ENCODE measurements at regions of chr11 and their contacts with region 1.

Region 1: DNA sequence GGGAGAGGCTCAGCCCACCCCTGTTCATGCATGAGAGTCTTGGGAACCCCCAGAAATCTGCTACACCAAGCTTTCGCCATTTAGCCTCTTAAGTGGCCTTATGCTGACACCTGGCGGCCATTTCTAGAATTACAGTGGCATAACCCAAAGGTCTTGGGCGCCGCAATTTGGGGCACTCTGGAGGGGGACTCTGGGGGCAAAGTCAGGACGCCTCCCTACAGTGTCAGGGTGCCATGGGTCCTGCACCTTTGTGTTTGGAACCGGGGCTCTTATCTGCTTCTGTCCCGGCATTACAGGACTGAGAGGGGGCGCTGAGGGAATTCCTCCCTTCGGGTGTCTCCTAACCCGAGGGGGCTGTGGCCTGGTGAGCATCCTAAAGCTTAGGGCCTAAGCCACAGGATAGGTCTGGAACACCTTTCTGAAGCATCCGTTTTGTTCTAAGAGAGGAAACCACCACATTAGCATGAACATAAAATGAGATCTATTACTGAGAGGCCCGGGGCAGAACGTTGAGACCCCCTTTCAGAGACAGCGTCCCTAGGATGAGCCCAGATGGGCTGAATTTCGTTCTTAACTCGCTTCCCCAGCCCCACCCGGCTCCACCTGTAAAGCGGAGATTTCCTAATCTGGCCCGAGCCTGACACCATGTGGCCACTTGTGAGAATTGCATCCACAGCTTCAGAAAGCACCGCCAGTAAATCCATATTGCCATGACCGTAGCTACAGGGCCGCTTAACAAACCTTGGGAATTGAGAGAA is 9.3 kb downstream of the INS start:
- DNase-seq: peak; percentile 80
- H3K4me3 Mint-ChIP-seq: no peak overlapping the region
- H3K27ac Mint-ChIP-seq: no peak overlapping the region
- H3K4me1 Mint-ChIP-seq: no peaks in the 10 kb centered on the region
- H3K27me3 Mint-ChIP-seq: peaks cover 87% of the 10 kb centered on the region
- CTCF ChIP-seq: peak; percentile 81

Region 2: GRCh38 chr11:1694064-1694845 is 457.4 kb before region 1 on chr11:
- CTCF ChIA-PET with region 1: interaction called, 16 read pairs
- intact Hi-C with region 1: loop called (anchors 5 kb)
- DNase-seq: peak; percentile 94
- H3K4me3 Mint-ChIP-seq: peak overlapping the region; percentile 68
- H3K27ac Mint-ChIP-seq: no peak overlapping the region
- H3K4me1 Mint-ChIP-seq: peaks cover 16% of the 10 kb centered on the region
- H3K27me3 Mint-ChIP-seq: peaks cover 36% of the 10 kb centered on the region
- CTCF ChIP-seq: peak; percentile 92

Region 3: DNA sequence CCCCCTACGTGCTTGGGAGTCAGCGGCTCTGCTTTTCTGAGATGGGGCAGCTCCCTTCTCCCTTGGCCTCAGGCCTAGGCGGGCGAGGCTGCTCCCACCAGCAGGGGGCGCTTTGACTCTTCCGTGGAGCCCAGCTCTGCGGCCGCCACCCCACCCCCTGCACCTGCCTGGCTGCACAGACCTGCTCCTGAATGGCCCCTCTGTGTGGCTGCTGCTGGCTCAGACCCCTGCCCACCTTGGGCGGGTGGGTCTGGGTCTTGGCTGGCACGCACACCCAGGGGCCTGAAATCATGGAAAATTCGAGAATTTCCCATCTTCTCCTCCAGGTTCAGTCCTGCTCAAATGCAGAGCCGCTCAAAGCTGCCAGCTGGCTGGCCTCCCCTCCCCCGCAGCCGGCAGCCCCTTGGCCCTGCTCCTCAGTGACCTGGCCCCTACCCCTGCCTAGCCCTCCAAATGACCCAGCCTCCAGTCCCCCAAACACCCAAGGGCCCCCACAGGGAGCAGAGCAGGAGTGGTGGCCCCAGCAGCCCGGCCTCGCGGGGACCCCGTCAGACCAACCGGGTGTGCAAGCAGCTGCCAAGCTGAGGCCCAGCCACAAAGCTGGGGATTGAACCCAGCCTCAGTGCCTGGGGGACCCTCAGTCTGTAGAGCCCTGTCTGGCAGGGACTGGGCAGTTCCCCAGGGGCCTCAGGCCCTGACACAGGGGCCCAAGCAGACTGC is 269.0 kb before region 1 on chr11:
- CTCF ChIA-PET with region 1: interaction called, 16 read pairs
- intact Hi-C with region 1: loop called (anchors 5 kb)
- DNase-seq: peak; percentile 88
- H3K4me3 Mint-ChIP-seq: no peak overlapping the region
- H3K27ac Mint-ChIP-seq: no peak overlapping the region
- H3K4me1 Mint-ChIP-seq: no peaks in the 10 kb centered on the region
- H3K27me3 Mint-ChIP-seq: peaks cover 1% of the 10 kb centered on the region
- CTCF ChIP-seq: peak; percentile 83

Region 4: GRCh38 chr11:2027708-2028107 is 124.0 kb before region 1 on chr11:
- CTCF ChIA-PET with region 1: interaction called, 159 read pairs
- intact Hi-C with region 1: no loop called
- DNase-seq: no peak
- H3K4me3 Mint-ChIP-seq: no peak overlapping the region
- H3K27ac Mint-ChIP-seq: no peak overlapping the region
- H3K4me1 Mint-ChIP-seq: no peaks in the 10 kb centered on the region
- H3K27me3 Mint-ChIP-seq: no peaks in the 10 kb centered on the region
- CTCF ChIP-seq: no peak

Region 5: DNA sequence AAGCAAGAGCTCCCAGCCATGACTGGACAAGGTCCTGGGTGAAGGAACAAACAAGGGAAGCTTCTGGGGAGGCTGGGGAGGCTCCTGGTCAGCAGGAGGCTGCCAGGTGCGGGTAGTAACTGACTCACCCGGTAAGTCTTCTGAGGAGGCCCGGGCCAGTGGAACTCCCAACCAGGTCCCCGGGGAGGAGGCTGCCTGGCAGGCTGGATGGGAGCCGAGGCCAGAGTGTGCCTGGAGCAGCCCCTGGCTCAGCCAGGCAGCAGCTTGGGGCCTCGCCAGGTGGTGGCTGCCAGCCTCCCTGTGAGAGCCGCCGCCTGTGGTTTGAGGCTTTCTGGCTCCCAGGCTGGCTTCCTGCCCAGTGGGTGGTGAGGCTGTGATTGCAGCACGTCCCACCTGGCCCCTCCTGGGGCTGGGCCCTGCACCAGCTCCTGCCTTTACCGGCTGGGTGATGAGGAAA is 58.7 kb before region 1 on chr11:
- CTCF ChIA-PET with region 1: interaction called, 11 read pairs
- intact Hi-C with region 1: no loop called
- DNase-seq: peak; percentile 94
- H3K4me3 Mint-ChIP-seq: no peak overlapping the region
- H3K27ac Mint-ChIP-seq: no peak overlapping the region
- H3K4me1 Mint-ChIP-seq: peaks cover 16% of the 10 kb centered on the region
- H3K27me3 Mint-ChIP-seq: peaks cover 12% of the 10 kb centered on the region
- CTCF ChIP-seq: no peak

Region 6: DNA sequence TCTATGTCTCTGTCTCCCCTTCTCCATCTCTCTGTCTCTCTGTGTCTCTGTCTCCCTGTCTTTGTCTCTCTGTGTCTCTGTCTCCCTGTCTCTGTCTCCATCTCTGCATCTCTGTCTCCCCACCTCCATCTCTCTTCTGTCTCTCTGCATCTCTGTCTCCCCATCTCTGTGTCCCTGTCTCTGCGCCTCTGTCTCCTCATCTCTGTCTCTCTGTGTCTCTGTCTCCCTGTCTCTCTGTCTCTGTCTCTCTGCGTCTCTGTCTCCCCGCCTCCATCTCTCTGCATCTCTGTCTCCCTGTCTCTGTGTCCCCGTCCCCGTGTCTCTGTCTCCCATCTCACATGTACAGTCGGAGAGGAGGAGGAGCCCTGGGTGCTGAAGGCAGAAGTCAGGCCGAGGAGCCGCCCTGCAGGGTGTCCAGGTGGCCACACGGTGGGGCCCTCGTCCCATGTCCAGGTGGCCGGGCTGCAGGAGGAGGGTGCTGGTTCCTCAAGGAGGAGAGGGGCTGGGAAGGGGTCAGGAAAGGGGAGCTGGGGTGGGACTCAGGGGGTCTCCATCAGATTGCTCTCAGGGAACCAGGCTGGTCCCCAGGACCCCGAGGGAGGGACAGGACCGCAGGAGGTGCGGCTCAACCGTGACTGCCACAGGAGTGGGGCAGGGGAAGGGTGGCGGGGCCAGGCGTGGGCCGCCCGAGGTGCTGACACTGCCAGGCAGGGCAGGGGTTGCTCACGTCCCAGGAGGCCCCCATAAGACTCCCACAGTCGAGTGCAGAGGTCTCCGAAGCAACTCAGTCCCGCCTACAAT is 45.5 kb after region 1 on chr11:
- CTCF ChIA-PET with region 1: no interaction called
- intact Hi-C with region 1: no loop called
- DNase-seq: peak; percentile 90
- H3K4me3 Mint-ChIP-seq: no peak overlapping the region
- H3K27ac Mint-ChIP-seq: no peak overlapping the region
- H3K4me1 Mint-ChIP-seq: peaks cover 10% of the 10 kb centered on the region
- H3K27me3 Mint-ChIP-seq: peaks cover 31% of the 10 kb centered on the region
- CTCF ChIP-seq: peak; percentile 89

Region 7: GRCh38 chr11:2355000-2355644 is 203.4 kb after region 1 on chr11:
- CTCF ChIA-PET with region 1: no interaction called
- intact Hi-C with region 1: no loop called
- DNase-seq: no peak
- H3K4me3 Mint-ChIP-seq: no peak overlapping the region
- H3K27ac Mint-ChIP-seq: no peak overlapping the region
- H3K4me1 Mint-ChIP-seq: no peaks in the 10 kb centered on the region
- H3K27me3 Mint-ChIP-seq: peaks cover 78% of the 10 kb centered on the region
- CTCF ChIP-seq: no peak

Region 8: DNA sequence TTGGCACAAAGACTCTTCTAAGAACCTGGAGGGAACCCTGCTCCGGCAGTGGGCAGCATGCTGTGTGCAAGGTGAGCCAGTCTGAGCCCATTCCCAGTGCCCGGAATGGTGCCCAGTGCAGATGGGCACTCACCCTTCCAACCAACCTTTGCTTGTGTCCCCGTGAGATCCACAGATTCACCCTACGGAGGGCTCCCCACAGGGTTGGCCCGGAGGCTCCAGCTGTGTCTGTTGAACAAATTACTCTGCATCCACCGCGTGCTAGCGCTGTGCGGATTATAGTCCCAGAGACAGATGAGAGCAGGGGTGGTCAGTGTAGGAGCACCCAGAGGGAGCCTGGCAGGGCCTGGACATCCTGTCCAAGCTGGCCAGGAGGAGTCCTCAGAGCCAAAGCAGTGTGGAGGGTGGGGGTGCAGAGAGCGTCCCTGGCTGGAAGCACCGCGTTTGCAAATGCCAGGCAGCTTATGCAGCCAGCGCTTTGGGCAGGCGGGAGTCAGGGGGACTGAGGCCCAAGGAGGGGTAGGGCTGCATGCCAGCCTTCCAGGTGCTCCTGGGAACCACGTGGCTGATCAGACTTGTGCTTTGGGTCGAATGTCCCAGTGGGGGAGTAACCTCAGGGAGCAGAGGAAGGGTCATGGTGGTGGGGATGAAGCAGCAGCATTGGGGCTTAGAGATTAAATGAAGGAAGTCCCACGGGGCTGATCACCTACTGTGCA is 373.6 kb after region 1 on chr11:
- CTCF ChIA-PET with region 1: no interaction called
- intact Hi-C with region 1: no loop called
- DNase-seq: no peak
- H3K4me3 Mint-ChIP-seq: no peak overlapping the region
- H3K27ac Mint-ChIP-seq: no peak overlapping the region
- H3K4me1 Mint-ChIP-seq: no peaks in the 10 kb centered on the region
- H3K27me3 Mint-ChIP-seq: peaks cover 12% of the 10 kb centered on the region
- CTCF ChIP-seq: no peak

Measured in Calu3 (cell line).